AG04450 (cell line): ENCODE measurements at regions of chr11 and their contacts with region 1.

Region 1: DNA sequence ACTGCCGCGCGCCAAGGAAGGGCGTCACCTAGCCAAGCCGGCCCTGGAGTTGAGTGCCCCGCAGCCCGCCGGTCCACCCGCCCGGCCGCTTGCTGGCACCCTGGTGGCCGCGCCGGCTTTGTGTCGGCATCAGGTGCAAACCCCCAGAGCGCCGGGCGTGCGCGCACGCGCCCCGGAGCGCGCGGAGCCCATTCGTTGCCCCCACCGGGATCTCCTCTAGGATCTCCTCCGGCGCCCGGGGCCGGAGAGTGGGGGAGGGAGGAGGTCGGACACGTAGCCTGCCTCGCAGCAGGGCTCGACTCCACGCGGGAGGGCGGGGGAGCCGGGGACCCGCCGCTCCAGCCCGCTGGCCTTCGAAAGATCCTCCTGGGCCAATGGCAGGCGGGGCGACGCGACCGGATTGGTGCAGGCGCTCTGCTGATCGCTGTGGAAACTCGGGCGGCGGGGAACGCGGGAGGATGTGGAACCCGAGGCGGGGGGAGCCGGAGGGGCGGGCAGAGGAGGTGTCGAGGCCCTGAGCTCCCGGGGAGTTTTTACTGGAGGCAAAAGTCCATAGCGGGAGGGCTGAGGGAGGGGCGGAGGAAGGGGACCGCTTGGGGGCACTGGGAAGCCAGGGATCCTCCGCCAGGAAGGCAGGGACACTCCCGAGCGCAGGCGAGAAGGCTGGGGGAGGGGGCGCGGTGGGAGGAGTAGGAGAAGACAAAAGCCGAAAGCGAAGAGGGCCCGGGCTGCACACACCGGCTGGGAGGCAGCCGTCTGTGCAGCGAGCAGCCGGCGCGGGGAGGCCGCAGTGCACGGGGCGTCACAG is at the start of gene FADS2:
- DNase-seq: peak; percentile 80
- H3K4me3 ChIP-seq: peak within 1 kb of the TSS; percentile 87
- H3K27ac ChIP-seq: peak within 1 kb of the TSS; percentile 65
- H3K27me3 ChIP-seq: no peaks in the 10 kb centered on the region
- CTCF ChIP-seq: 0 out of 2 replicates have a peak, but pooled peaks have one; percentile 3
- polyA plus RNA-seq, gene FADS2: 183 and 218 TPM in 2 replicates

Region 2: DNA sequence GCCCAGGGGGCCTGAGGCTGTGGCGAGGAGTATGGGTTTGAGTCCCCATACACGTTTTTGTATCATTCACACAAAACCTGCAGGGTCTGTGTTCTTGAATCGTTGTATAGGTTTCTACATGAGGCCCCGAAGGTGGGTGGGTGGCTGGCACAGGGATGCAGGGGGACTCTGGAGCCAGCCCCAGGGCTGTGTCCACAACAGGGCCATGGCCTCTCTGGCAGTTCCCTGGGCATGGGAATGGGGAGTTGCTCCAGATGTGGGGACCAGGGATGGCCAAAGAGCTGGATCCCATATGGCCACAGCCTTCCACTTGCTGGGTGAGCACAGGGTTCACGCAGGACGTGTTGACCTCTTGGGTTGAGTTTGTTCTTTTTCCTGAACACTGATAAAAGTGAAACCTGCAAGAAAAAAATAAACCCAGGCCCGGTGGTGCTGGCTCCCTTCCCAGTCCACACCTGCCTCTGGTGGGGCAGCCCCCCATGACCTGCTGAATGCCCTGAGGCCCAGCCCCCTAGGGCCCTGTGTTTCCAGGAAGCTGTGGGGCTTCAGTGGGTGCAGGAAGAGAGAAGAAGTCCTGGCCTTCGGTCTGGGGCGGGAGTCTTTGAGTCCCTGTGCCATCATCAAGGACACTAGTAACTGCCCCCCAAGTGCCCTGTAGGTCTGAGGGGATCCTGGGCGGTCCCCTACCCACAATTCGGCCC is 59.2 kb before region 1 on chr11:
- CTCF ChIA-PET with region 1: no interaction called
- POLR2A ChIA-PET with region 1: interaction called, 12 read pairs
- DNase-seq: no peak
- H3K4me3 ChIP-seq: no peak overlapping the region
- H3K27ac ChIP-seq: no peak overlapping the region
- H3K27me3 ChIP-seq: no peaks in the 10 kb centered on the region
- CTCF ChIP-seq: no peak

Region 3: GRCh38 chr11:61806785-61807184 is 21.0 kb before region 1 on chr11:
- CTCF ChIA-PET with region 1: no interaction called
- POLR2A ChIA-PET with region 1: no interaction called
- DNase-seq: no peak
- H3K4me3 ChIP-seq: no peak overlapping the region
- H3K27ac ChIP-seq: no peak overlapping the region
- H3K27me3 ChIP-seq: no peaks in the 10 kb centered on the region
- CTCF ChIP-seq: no peak

Region 4: GRCh38 chr11:61816736-61817455 is 10.9 kb before region 1 on chr11 and contains the start of gene FADS1:
- CTCF ChIA-PET with region 1: interaction called, 11 read pairs
- POLR2A ChIA-PET with region 1: interaction called, 29 read pairs
- DNase-seq: peak; percentile 89
- H3K4me3 ChIP-seq: peak within 1 kb of the TSS; percentile 89
- H3K27ac ChIP-seq: peak within 1 kb of the TSS; percentile 86
- H3K27me3 ChIP-seq: no peaks in the 10 kb centered on the region
- CTCF ChIP-seq: peak; percentile 57
- polyA plus RNA-seq, gene FADS1: 50.4 and 52.4 TPM in 2 replicates

Region 5: DNA sequence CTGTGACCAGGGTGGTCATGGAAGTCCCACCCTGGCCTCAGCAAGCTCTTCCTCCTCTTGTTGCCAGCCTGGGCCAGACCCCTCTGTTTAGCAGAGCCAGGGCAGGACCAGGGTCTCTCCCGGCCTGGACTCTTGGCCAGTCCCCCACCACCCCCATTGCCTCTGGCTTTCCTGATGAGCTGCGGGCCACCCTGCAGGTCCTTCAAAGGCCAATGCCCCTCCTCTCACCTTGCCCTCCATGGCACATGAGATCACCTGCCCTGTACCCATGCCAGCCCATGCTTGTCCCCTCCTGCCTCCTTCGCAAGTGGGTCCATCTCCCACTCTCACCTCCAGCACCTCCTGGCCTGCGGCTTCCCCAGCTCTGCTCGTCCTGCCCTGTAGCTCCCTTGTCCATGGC is 10.7 kb after region 1 on chr11:
- CTCF ChIA-PET with region 1: no interaction called
- POLR2A ChIA-PET with region 1: no interaction called
- DNase-seq: no peak
- H3K4me3 ChIP-seq: no peak overlapping the region
- H3K27ac ChIP-seq: no peak overlapping the region
- H3K27me3 ChIP-seq: no peaks in the 10 kb centered on the region
- CTCF ChIP-seq: no peak